ENCODE measurements at regions of chr16 and their contacts with region 1.

Region 1: GRCh38 chr16:71484006-71484893 is 4.9 kb downstream of the ZNF19 start:
- DNase-seq: peak; percentile 84 to 89
- ATAC-seq: peak; percentile 95

Region 2: GRCh38 chr16:71461686-71462648 is 22.3 kb before region 1 on chr16 and contains the start of gene ZNF23:
- intact Hi-C with region 1: loop called in 1 of 2 experiments (anchors 2 kb)
- DNase-seq: peak; percentile 84 to 87
- ATAC-seq: peak; percentile 100
- total RNA-seq, gene ZNF23: 6.4 to 7.2 TPM

Region 3: DNA sequence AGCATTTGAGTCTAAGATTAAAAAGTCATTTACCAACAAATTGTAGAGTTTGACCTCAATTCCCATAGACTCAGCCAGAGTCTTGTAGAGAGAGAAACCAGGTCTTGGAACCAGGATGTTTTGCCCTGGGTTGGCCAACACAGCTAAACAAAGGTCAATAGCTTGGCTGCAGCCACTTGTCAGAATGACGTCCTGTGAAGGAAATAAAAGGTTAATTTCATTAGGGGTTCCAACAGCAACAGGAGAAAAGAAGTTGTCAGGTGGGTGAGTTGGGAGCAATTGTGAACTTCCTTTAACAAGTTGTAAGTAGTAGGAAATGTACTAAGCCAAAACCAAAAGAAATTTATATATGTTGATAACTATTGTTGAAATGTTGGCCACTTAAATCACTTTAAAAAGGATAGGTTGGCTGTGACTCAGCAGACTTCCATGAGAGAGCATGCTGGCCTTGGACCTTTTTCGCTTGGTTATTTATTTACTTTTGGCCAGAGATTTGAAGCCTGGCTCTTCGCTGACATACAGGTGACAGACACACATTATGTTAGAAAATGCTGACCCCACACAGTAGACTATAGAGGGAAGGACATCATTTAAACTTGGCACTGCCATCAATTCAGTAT is 88.4 kb after region 1 on chr16:
- intact Hi-C with region 1: no loop called
- DNase-seq: no peak
- ATAC-seq: peak; percentile 58